ENCODE measurements at regions of chr17 and their contacts with region 1.

Region 1: DNA sequence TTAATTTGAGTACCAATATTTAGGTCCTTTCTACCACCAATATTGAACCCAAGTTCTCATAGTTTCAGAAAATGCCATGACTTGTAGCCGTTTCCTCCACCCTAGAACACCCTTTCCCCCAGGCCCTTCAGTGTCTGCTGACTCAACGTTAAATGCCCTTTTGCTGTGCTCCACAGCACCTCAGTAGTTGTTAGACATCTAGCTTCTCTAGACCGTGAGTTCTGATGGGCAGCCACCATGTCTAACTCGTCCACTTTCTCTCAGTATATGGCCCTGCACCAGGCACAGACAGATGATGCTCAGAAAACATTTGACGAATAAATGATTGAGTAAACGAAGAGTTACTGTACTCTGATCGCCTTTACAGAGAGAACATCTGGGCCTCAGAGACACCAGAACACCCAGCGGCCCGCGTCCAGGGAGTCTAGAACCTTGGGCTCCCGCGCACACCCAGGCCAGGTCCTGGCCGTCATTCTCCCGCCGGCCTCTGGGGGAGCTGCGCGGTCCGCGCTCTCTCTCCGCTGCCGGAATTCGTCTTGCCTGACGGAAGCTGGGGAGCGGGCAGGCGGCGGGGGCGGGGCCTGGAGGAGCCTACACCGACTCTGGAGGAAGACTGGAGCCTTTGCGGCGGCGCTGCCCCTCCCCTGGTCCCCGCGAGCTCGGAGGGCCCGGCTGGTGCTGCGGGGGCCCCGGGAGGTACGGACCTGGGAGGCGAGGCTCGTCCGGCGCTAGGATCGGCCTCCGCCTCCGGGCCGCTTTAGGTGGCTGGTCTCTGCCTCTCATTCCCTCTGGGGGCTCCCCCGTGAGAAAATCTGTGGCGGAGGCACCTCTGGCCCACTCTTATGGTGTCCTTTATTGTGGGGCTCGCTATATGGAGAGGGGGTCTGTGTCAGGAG is at the start of gene NKIRAS2:
- DNase-seq: peak; percentile 76
- ATAC-seq: peak; percentile 77
- H3K4me3 ChIP-seq: peak within 1 kb of the TSS; percentile 96
- H3K27ac ChIP-seq: peak within 1 kb of the TSS; percentile 73
- H3K4me1 ChIP-seq: peaks cover 24 to 44% of the 10 kb centered on the region in 2 experiments
- H3K27me3 ChIP-seq: no peaks in the 10 kb centered on the region
- CTCF ChIP-seq: peak; percentile 57 to 91 (median 84); a peak in 5 of 6 replicates
- POLR2A ChIP-seq: peak; percentile 69
- RAD21 ChIP-seq: no peak
- total RNA-seq, gene NKIRAS2: 26.4 TPM

Region 2: DNA sequence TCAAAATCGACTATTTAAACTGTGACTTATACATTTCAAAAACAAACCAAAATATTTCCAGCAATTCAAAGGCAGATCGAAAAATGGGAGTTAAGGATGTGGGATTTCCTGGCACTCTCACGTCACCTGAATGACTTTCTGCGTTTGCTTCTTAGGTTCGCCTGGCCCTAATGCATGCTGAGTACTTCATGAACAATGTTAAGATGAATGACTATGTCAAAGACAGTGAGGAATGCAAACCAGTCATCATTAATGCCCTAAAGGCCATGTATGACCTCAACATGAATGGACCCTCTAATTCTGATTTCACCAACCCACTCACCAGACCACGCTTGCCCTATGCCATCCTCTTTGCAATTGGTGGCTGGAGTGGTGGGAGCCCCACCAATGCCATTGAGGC is 174.8 kb before region 1 on chr17:
- CTCF ChIA-PET with region 1: no interaction called
- POLR2A ChIA-PET with region 1: no interaction called
- RAD21 ChIA-PET with region 1: no interaction called
- intact Hi-C with region 1: no loop called
- DNase-seq: no peak
- ATAC-seq: no peak
- H3K4me3 ChIP-seq: no peak overlapping the region
- H3K27ac ChIP-seq: no peak overlapping the region
- H3K4me1 ChIP-seq: peaks cover 15 to 21% of the 10 kb centered on the region in 2 experiments
- H3K27me3 ChIP-seq: no peaks in the 10 kb centered on the region
- CTCF ChIP-seq: no peak
- POLR2A ChIP-seq: no peak
- RAD21 ChIP-seq: no peak

Region 3: DNA sequence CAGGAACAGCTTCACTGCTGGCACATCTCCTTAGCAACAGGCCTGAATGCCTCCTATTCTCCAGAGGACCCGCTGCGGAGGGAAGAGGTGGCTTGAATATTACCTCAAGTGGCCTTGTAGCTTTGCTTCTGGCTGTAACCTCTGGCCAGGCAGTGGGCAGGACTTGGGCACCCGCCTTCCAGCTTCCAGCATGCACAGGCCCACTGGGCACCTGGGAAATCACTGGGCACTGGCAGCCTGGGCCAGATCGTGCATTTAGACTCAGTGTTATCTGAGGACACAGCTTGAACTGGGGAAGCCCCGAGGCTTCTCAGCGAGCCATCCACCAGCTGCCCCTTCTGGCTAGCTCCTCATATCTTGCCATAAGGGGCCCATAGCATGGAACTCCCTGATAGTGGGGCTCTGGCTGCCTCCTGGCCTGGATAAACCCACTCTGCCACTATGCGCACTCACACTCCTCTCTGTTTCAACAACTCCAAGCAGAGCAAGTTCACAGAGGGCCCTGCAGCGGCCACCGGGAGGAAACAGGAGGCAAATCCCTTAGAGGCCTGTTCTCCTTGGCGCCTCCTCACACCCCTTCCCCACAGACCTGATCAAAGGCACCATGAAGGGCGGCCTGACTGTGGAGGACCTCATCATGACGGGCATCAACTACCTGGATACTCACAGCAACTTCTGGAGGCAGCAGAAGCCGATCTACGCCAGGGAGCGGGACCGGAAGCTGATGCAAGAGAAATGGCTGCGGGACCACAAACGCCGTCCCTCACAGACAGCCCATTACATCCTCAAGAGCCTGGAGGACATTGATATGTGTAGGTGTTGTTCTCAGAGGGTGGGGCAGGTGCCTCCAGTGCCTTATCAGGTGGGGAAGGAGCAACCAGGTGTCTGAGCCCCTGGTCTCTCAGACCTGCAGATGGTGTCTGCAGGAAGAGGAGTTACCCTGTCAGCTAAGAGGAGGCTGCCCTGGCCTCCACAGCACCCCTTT is 81.5 kb before region 1 on chr17:
- CTCF ChIA-PET with region 1: no interaction called
- POLR2A ChIA-PET with region 1: no interaction called
- RAD21 ChIA-PET with region 1: no interaction called
- intact Hi-C with region 1: no loop called
- DNase-seq: no peak
- ATAC-seq: no peak
- H3K4me3 ChIP-seq: no peak overlapping the region
- H3K27ac ChIP-seq: no peak overlapping the region
- H3K4me1 ChIP-seq: peaks cover 0 to 9% of the 10 kb centered on the region in 2 experiments; a peak in 1 of 4 replicates
- H3K27me3 ChIP-seq: no peaks in the 10 kb centered on the region
- CTCF ChIP-seq: no peak
- POLR2A ChIP-seq: no peak
- RAD21 ChIP-seq: no peak

Region 4: DNA sequence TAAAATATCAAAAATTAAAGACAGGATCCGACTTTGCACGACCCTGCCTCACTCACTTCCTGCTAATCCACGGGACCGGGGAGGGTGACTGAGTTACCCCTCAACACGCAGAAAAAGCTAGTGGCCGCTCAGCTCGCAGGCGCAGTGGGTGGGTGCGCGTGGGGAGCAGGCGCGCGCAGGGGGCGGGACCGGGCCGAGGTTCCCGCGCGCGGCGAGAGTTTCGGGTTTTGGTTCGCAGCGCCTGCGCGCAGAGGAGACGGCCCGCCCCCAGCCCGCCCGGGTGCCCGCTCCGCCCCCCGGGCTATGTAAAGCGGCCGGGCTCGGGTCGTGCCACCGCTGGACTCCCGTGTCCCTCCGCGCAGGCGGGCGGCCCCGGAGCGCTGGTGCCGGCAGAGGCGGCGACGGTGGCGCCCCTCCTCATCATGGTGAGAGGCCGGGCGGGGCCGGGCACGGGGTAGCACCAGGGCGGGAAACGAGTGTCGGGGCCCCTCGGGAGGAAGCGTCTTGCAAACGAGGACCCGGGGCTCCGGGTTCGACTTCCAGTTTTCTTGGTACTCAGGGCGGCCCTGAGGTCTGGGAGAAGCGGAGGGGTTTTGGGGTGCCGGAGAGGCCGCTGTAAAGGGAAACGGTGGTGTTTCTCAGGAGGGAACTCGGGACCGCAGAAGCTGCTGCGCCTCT is 53.2 kb before region 1 on chr17 and contains the start of gene CNP:
- CTCF ChIA-PET with region 1: interaction called, 15 read pairs
- POLR2A ChIA-PET with region 1: interaction called, 17 read pairs
- RAD21 ChIA-PET with region 1: interaction called, 3 to 5 read pairs
- intact Hi-C with region 1: loop called (anchors 5 kb)
- DNase-seq: peak; percentile 73
- ATAC-seq: peak; percentile 76
- H3K4me3 ChIP-seq: peak within 1 kb of the TSS; percentile 54 to 77
- H3K27ac ChIP-seq: peak within 1 kb of the TSS; percentile 73
- H3K4me1 ChIP-seq: peaks cover 7 to 22% of the 10 kb centered on the region in 2 experiments
- H3K27me3 ChIP-seq: no peaks in the 10 kb centered on the region
- CTCF ChIP-seq: no peak
- POLR2A ChIP-seq: peak; percentile 79
- RAD21 ChIP-seq: no peak
- total RNA-seq, gene CNP: 51.2 TPM

Region 5: GRCh38 chr17:42527273-42527703 is 507.5 kb after region 1 on chr17:
- CTCF ChIA-PET with region 1: interaction called, 3 read pairs
- POLR2A ChIA-PET with region 1: no interaction called
- RAD21 ChIA-PET with region 1: no interaction called
- intact Hi-C with region 1: loop called (anchors 10 kb)
- DNase-seq: peak; percentile 69
- ATAC-seq: peak; percentile 92
- H3K4me3 ChIP-seq: no peak overlapping the region
- H3K27ac ChIP-seq: no peak overlapping the region
- H3K4me1 ChIP-seq: peaks cover 27 to 66% of the 10 kb centered on the region in 2 experiments
- H3K27me3 ChIP-seq: no peaks in the 10 kb centered on the region
- CTCF ChIP-seq: peak; percentile 86 to 95 (median 91)
- POLR2A ChIP-seq: no peak
- RAD21 ChIP-seq: peak; percentile 97

Measured in HCT116 (cell line).